Transverse colon (tissue), 4 donors: ENCODE measurements at regions of chr2 and their contacts with region 1.

Region 1: GRCh38 chr2:55168221-55169154 is 63.6 kb downstream of the CLHC1 start:
- DNase-seq: peak; percentile 54
- H3K4me3 ChIP-seq: no peak overlapping the region
- H3K27ac ChIP-seq: peak overlapping the region; percentile 49 to 70 (median 61)
- H3K4me1 ChIP-seq: peaks cover 9 to 49% (median 25%) of the 10 kb centered on the region in 4 donors
- H3K27me3 ChIP-seq: no peaks in the 10 kb centered on the region
- CTCF ChIP-seq: peak; percentile 60 to 85 (median 68)
- EP300 ChIP-seq: no peak
- POLR2A ChIP-seq: no peak

Region 2: GRCh38 chr2:54723131-54723995 is 445.1 kb before region 1 on chr2 and contains the start of gene EML6:
- in situ Hi-C with region 1: loop called in 1 of 4 experiments (anchors 25 kb)
- intact Hi-C with region 1: no loop called
- DNase-seq: peak; percentile 99
- H3K4me3 ChIP-seq: peak within 1 kb of the TSS; percentile 41 to 68 (median 60)
- H3K27ac ChIP-seq: peak within 1 kb of the TSS; percentile 75 to 85 (median 78)
- H3K4me1 ChIP-seq: peaks cover 0 to 19% (median 14%) of the 10 kb centered on the region in 4 donors
- H3K27me3 ChIP-seq: peaks cover 27% of the 10 kb centered on the region
- CTCF ChIP-seq: peak in 3 of 5 experiments; percentile 25 to 37 (median 35)
- EP300 ChIP-seq: no peak
- POLR2A ChIP-seq: peak; percentile 70
- total RNA-seq, gene EML6: 1.5 to 8.2 (median 3.4) TPM

Region 3: GRCh38 chr2:54899576-54900200 is 268.8 kb before region 1 on chr2:
- in situ Hi-C with region 1: loop called (anchors 10 to 25 kb)
- intact Hi-C with region 1: loop called (anchors 10 kb)
- DNase-seq: no peak
- H3K4me3 ChIP-seq: no peak overlapping the region
- H3K27ac ChIP-seq: peak overlapping the region in 1 of 4 donors; percentile 11
- H3K4me1 ChIP-seq: peaks cover 3 to 17% (median 13%) of the 10 kb centered on the region in 4 donors
- H3K27me3 ChIP-seq: no peaks in the 10 kb centered on the region
- CTCF ChIP-seq: peak; percentile 38 to 57 (median 48)
- EP300 ChIP-seq: no peak
- POLR2A ChIP-seq: no peak

Region 4: DNA sequence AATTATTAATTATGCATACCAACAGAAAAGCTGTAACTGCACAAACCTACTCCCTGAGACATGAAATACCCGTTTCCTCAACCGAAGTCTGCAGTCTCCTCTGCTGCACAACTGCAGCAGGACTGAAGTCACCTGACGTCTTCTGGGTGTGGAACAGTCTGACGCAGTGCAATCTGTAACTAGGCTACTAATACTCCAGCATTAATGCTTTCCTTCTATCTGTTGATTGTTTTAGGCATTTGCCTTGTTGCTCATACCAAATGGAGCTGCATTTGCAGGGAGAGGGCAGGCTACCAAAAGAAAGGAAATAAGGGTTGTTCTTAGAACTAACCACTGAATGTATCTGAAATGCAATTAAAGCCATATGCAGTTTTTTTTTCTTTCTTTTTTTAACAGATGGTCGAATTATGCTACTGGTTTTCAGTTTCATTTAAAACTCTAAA is 158.3 kb before region 1 on chr2:
- in situ Hi-C with region 1: loop called in 2 of 4 experiments (anchors 10 kb)
- intact Hi-C with region 1: loop called (anchors 10 kb)
- DNase-seq: peak; percentile 75
- H3K4me3 ChIP-seq: peak overlapping the region; percentile 15 to 49 (median 34)
- H3K27ac ChIP-seq: peak overlapping the region; percentile 71 to 82 (median 78)
- H3K4me1 ChIP-seq: peaks cover 34 to 97% (median 89%) of the 10 kb centered on the region in 4 donors
- H3K27me3 ChIP-seq: no peaks in the 10 kb centered on the region
- CTCF ChIP-seq: no peak
- EP300 ChIP-seq: no peak
- POLR2A ChIP-seq: peak; percentile 85

Region 5: GRCh38 chr2:55049043-55049793 is 119.3 kb before region 1 on chr2:
- in situ Hi-C with region 1: loop called in 3 of 4 experiments (anchors 10 to 25 kb)
- intact Hi-C with region 1: loop called (anchors 5 kb)
- DNase-seq: peak; percentile 92
- H3K4me3 ChIP-seq: peak overlapping the region; percentile 93 to 96 (median 96)
- H3K27ac ChIP-seq: peak overlapping the region; percentile 97 to 100 (median 98)
- H3K4me1 ChIP-seq: peaks cover 15 to 53% (median 38%) of the 10 kb centered on the region in 4 donors
- H3K27me3 ChIP-seq: no peaks in the 10 kb centered on the region
- CTCF ChIP-seq: peak; percentile 48 to 88 (median 61)
- EP300 ChIP-seq: no peak
- POLR2A ChIP-seq: peak; percentile 63

Region 6: GRCh38 chr2:55120634-55121359 is 47.7 kb before region 1 on chr2:
- in situ Hi-C with region 1: no loop called
- intact Hi-C with region 1: no loop called
- DNase-seq: peak; percentile 16
- H3K4me3 ChIP-seq: no peak overlapping the region
- H3K27ac ChIP-seq: peak overlapping the region; percentile 47 to 74 (median 60)
- H3K4me1 ChIP-seq: peaks cover 7 to 28% (median 14%) of the 10 kb centered on the region in 4 donors
- H3K27me3 ChIP-seq: no peaks in the 10 kb centered on the region
- CTCF ChIP-seq: no peak
- EP300 ChIP-seq: no peak
- POLR2A ChIP-seq: no peak